Activated CD4-positive, alpha-beta memory T cell treated with anti-CD3 and anti-CD28 coated beads for 36 hours (primary cell): ENCODE measurements at regions of chr9 and their contacts with region 1.

Region 1: DNA sequence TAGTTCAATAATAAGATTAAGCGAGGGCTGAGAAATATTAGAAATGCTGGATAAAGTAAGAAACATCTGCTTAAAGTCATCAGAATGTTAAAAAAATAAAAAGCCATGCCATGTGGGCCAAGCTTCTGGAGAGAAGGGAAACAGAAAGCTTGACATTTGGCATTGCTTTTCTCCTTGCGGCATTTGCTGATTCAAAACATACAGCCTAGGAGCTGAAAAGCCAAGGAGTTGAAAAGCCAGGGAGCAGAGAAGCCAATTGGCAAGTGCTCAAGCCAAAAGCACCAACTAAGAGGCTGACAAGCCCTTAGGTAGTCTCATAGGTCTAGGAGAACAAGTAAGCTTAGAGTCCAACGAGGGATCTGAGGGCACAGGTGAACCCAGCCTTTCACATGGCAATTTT is 754.3 kb downstream of the TLE4 start:
- DNase-seq: no peak
- H3K4me3 Mint-ChIP-seq: no peak overlapping the region
- H3K27ac Mint-ChIP-seq: no peak overlapping the region
- H3K4me1 Mint-ChIP-seq: no peaks in the 10 kb centered on the region
- H3K27me3 Mint-ChIP-seq: no peaks in the 10 kb centered on the region

Region 2: GRCh38 chr9:80292231-80292630 is 33.9 kb before region 1 on chr9:
- CTCF ChIA-PET with region 1: no interaction called
- POLR2A ChIA-PET with region 1: no interaction called
- intact Hi-C with region 1: no loop called
- DNase-seq: no peak
- H3K4me3 Mint-ChIP-seq: no peak overlapping the region
- H3K27ac Mint-ChIP-seq: no peak overlapping the region
- H3K4me1 Mint-ChIP-seq: no peaks in the 10 kb centered on the region
- H3K27me3 Mint-ChIP-seq: no peaks in the 10 kb centered on the region

Region 3: GRCh38 chr9:80378675-80379293 is 52.7 kb after region 1 on chr9:
- CTCF ChIA-PET with region 1: no interaction called
- POLR2A ChIA-PET with region 1: no interaction called
- intact Hi-C with region 1: no loop called
- DNase-seq: no peak
- H3K4me3 Mint-ChIP-seq: no peak overlapping the region
- H3K27ac Mint-ChIP-seq: no peak overlapping the region
- H3K4me1 Mint-ChIP-seq: no peaks in the 10 kb centered on the region
- H3K27me3 Mint-ChIP-seq: no peaks in the 10 kb centered on the region

Region 4: DNA sequence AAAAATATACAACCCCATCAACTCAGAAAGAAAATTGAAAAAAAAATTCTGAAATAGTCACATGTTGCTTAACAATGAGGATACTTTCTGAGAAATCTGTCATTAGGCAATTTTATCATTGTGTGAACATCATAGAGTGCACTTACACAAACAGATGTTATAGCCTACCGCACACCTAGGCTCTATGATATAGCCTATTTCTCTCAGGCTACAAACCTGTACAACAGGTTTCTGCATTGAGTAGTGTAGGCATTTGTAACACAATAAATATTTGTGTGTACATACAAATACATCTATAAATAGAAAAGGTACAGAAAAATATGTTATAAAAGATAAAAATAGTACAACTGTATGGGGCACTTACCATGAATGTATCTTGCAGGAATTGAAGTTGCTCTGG is 65.8 kb after region 1 on chr9:
- CTCF ChIA-PET with region 1: no interaction called
- POLR2A ChIA-PET with region 1: no interaction called
- intact Hi-C with region 1: loop called (anchors 10 kb)
- DNase-seq: no peak
- H3K4me3 Mint-ChIP-seq: no peak overlapping the region
- H3K27ac Mint-ChIP-seq: no peak overlapping the region
- H3K4me1 Mint-ChIP-seq: no peaks in the 10 kb centered on the region
- H3K27me3 Mint-ChIP-seq: no peaks in the 10 kb centered on the region